Motor neuron (in vitro differentiated cells): ENCODE measurements at regions of chr9 and their contacts with region 1.

Region 1: GRCh38 chr9:83937911-83938323 is 16.7 kb upstream of the KIF27 start:
- ATAC-seq: peak; percentile 27 to 90 (median 47)
- H3K4me3 ChIP-seq: no peak overlapping the region
- H3K27ac ChIP-seq: no peak overlapping the region
- H3K4me1 ChIP-seq: peaks cover 0 to 9% of the 10 kb centered on the region in 2 donors

Region 2: DNA sequence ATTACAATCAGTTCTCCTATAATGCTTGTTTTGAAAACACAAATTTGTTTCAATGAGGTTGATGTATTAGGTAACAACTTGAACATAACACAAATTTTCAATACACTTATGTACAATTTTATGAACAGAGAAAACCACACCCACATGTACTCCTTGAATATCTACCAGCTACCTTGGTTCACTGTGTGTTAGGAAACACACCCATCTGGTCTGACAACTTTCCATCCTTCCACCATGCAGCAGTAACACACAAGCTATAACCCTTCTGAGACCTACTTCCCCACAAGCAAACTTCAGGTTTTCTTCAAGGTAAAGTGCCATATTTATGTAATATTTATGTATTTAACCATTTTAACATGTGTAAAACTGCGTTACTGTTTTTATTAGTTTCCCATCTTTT is 193.7 kb before region 1 on chr9:
- in situ Hi-C with region 1: no loop called
- ATAC-seq: peak in 1 of 8 experiments; percentile 30
- H3K4me3 ChIP-seq: no peak overlapping the region
- H3K27ac ChIP-seq: no peak overlapping the region
- H3K4me1 ChIP-seq: no peaks in the 10 kb centered on the region

Region 3: GRCh38 chr9:84261082-84261746 is 323.3 kb after region 1 on chr9:
- in situ Hi-C with region 1: loop called in 7 of 9 experiments (anchors 10 to 25 kb)
- ATAC-seq: peak; percentile 84 to 94 (median 92)
- H3K4me3 ChIP-seq: no peak overlapping the region
- H3K27ac ChIP-seq: no peak overlapping the region
- H3K4me1 ChIP-seq: peaks cover 5 to 7% of the 10 kb centered on the region in 2 donors

Region 4: GRCh38 chr9:84315278-84315877 is 377.5 kb after region 1 on chr9:
- in situ Hi-C with region 1: loop called in 2 of 9 experiments (anchors 10 to 25 kb)
- ATAC-seq: peak in 6 of 8 experiments; percentile 32 to 84 (median 56)
- H3K4me3 ChIP-seq: no peak overlapping the region
- H3K27ac ChIP-seq: no peak overlapping the region
- H3K4me1 ChIP-seq: no peaks in the 10 kb centered on the region

Region 5: DNA sequence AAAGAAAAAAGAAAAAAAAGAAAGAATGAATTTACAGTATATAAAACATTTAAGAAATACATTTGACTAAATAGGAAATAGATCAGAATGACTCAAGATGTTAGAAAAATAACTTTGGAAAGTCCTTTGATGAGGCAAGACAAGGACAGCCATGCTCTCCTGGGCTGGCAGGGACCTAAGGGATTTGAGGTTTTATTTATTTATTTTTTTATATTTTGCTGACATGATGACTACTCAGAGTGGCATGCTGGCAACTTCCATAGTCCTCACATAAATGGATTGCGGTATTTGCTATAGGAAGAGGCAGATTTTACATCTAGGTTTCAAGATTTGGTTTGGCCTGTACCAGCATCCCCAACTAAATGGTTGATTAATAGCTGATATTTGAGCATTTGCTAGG is 384.9 kb after region 1 on chr9:
- in situ Hi-C with region 1: loop called in 2 of 9 experiments (anchors 10 to 25 kb)
- ATAC-seq: no peak
- H3K4me3 ChIP-seq: no peak overlapping the region
- H3K27ac ChIP-seq: no peak overlapping the region
- H3K4me1 ChIP-seq: no peaks in the 10 kb centered on the region